ENCODE measurements at regions of chr3 and their contacts with region 1.

Region 1: DNA sequence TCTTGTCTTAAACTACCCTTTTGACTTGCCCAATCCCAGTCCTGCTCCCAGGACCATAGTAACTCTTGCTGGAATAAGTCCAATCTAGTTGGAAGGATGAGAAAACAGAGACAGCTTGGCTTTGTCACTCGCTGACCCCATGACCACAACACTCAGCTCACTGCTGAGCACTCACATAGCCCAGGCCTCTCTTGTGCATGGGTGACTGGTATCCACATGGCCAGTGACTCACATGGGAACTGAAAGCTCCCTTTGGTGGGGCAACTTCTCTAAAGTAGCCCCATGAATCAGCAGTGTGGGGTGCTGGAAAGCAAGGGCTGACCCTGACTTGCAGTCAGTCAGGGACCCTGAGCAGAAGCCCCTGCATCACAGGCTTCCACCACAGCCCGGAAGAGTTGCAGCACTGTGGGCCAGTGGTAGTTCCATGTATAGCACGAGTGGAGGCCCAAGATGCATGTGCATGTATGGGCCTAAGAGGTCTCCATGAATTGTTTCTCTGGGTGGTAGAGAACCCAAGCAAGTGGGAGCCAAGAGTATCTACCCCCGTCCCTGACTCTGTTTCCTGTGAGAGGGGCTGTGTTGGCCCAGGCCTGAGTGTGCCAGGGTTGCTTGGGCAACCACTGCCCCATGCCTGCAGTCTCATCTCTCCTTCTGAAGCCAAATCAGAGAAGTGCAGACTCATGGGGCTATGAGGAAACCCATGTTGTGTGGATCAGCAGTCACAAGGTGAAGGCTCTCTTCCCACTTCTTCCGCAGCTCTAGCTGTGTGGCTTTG is 62.1 kb upstream of the XCR1 start:
- DNase-seq: peak; percentile 38 to 87 (median 72)
- H3K4me3 ChIP-seq: no peak overlapping the region
- H3K27ac ChIP-seq: peak overlapping the region in 2 of 5 donors; percentile 67 to 93
- H3K4me1 ChIP-seq: peaks cover 0 to 4% of the 10 kb centered on the region in 2 donors
- H3K27me3 ChIP-seq: no peaks in the 10 kb centered on the region
- CTCF ChIP-seq: no peak
- POLR2A ChIP-seq: no peak

Region 2: DNA sequence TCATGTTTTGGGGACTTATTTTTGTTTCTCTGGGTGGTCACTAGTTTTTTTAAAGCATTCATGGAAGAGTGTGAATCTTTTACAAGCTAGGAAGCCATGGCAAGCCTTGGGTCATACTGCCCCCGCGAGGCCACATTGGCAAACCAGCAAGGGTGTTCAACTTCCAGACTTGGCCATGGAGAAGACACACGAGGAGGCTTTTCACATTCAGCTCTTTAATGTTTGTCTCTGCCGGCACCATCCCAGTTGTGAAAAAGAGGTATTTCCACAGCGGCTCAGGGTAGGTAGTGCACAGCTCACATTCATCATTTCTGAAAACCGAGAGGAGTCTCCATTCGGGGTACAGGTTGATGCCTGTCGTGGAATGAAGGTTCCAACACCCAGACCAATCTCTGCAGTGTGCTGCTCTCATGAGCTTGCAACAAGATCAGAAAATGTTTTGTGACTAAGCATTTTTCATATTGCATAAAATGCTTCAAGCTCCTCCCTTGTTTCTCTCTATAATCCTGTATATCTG is 289.1 kb after region 1 on chr3:
- intact Hi-C with region 1: loop called in 1 of 2 experiments (anchors 10 kb)
- DNase-seq: peak; percentile 49 to 78 (median 61)
- H3K4me3 ChIP-seq: no peak overlapping the region
- H3K27ac ChIP-seq: no peak overlapping the region
- H3K4me1 ChIP-seq: no peaks in the 10 kb centered on the region
- H3K27me3 ChIP-seq: peaks cover 4% of the 10 kb centered on the region
- CTCF ChIP-seq: peak; percentile 25 to 59 (median 56)
- POLR2A ChIP-seq: no peak

Measured in adrenal gland (tissue), 19 donors.